Vagina (tissue), 2 donors: ENCODE measurements at regions of chr14 and their contacts with region 1.

Region 1: DNA sequence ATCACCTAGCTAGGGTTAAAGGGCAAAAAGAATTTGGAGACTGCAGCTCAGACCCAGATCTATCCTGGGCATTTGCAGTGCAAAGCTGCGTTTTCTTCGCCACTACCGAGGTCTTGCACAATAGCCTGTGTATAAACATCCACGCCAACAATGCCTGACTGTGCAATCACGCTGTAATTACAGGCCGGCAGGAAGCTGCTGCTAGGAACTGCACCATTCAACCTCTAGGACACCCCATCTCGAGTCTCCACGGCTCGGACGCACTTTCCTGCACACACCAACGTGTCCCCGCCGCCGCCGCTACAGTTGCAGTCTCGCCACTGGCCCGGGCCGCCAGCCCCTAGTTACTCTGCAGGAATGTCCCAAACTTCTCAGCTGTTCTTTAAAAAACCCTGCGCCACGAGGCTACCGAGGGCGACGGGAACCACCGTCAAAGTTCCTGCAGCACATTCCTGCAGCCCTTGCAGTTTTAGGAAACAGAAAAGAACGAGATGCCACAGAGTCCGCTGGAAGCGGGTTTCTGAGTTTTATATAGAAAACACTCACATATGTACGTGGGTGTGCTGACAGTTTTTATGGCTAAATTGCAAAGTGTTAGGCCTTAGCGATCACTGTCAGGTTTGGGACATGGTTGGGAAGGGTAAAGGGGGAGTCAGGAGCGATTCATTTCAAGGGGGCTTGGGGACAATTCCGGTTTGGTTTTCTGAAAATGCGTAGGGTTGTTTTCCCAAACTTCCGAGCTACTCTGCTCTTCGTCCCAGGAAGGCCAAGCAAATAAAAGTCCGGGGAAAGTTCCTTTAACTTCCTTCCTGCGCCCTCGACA is 65.5 kb upstream of the PTGR2 start:
- DNase-seq: peak in 1 of 2 donors; percentile 93
- H3K4me3 ChIP-seq: peak overlapping the region; percentile 68 to 97
- H3K27ac ChIP-seq: peak overlapping the region; percentile 98
- H3K4me1 ChIP-seq: peaks cover 80% of the 10 kb centered on the region
- H3K27me3 ChIP-seq: no peaks in the 10 kb centered on the region
- CTCF ChIP-seq: no peak
- POLR2A ChIP-seq: peak in 1 of 2 donors; percentile 65

Region 2: GRCh38 chr14:73728717-73729330 is 57.3 kb before region 1 on chr14:
- intact Hi-C with region 1: loop called (anchors 5 kb)
- DNase-seq: no peak
- H3K4me3 ChIP-seq: no peak overlapping the region
- H3K27ac ChIP-seq: peak overlapping the region; percentile 69
- H3K4me1 ChIP-seq: peaks cover 46% of the 10 kb centered on the region
- H3K27me3 ChIP-seq: no peaks in the 10 kb centered on the region
- CTCF ChIP-seq: peak; percentile 93 to 95 (median 94)
- POLR2A ChIP-seq: no peak

Region 3: DNA sequence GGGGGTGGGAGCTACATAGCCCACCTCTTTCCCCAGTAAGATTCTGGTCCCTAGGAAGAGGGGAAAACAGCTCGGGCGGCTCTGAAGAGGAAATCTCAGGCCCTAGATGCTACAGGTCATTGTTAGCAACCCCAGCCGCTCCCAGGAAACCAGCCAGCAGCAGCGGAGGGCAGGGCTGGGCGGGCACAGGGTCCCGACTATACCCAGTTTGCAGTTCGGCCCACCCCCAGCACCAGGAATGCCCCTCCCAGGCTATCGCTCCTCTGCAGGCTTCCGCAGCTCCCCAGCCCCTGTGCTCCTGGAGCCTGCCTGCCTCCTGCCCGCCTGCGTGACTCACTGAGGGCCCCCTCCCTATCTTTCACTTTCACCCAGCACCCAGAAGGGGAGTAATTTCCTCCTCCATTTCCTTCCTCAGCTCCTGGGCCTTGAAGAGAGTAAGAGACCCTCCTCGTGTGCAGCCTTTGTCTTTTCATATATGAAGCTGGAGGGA is 44.7 kb before region 1 on chr14:
- intact Hi-C with region 1: loop called (anchors 5 kb)
- DNase-seq: no peak
- H3K4me3 ChIP-seq: peak overlapping the region; percentile 36 to 39
- H3K27ac ChIP-seq: peak overlapping the region; percentile 93
- H3K4me1 ChIP-seq: peaks cover 82% of the 10 kb centered on the region
- H3K27me3 ChIP-seq: no peaks in the 10 kb centered on the region
- CTCF ChIP-seq: no peak
- POLR2A ChIP-seq: no peak

Region 4: GRCh38 chr14:73759714-73760597 is 26.1 kb before region 1 on chr14:
- intact Hi-C with region 1: loop called (anchors 2 kb)
- DNase-seq: peak in 1 of 2 donors; percentile 99
- H3K4me3 ChIP-seq: peak overlapping the region; percentile 68 to 96
- H3K27ac ChIP-seq: peak overlapping the region; percentile 98
- H3K4me1 ChIP-seq: peaks cover 85% of the 10 kb centered on the region
- H3K27me3 ChIP-seq: no peaks in the 10 kb centered on the region
- CTCF ChIP-seq: no peak
- POLR2A ChIP-seq: peak in 1 of 2 donors; percentile 94